Endothelial cell of umbilical vein (primary cell): ENCODE measurements at regions of chr18 and their contacts with region 1.

Region 1: GRCh38 chr18:28003451-28003850 is 173.5 kb downstream of the CDH2 start:
- DNase-seq: peak; percentile 83
- H3K4me3 ChIP-seq: no peak overlapping the region
- H3K27ac ChIP-seq: peak overlapping the region; percentile 70
- H3K4me1 ChIP-seq: peaks cover 31% of the 10 kb centered on the region
- H3K27me3 ChIP-seq: no peaks in the 10 kb centered on the region
- CTCF ChIP-seq: no peak
- POLR2A ChIP-seq: no peak

Region 2: GRCh38 chr18:26422472-26423162 is 1580.8 kb before region 1 on chr18:
- CTCF ChIA-PET with region 1: no interaction called
- POLR2A ChIA-PET with region 1: no interaction called
- dilution Hi-C with region 1: no loop called
- intact Hi-C with region 1: no loop called
- DNase-seq: no peak
- H3K4me3 ChIP-seq: no peak overlapping the region
- H3K27ac ChIP-seq: no peak overlapping the region
- H3K4me1 ChIP-seq: no peaks in the 10 kb centered on the region
- H3K27me3 ChIP-seq: no peaks in the 10 kb centered on the region
- CTCF ChIP-seq: no peak
- POLR2A ChIP-seq: no peak

Region 3: GRCh38 chr18:27839141-27839540 is 164.3 kb before region 1 on chr18:
- CTCF ChIA-PET with region 1: no interaction called
- POLR2A ChIA-PET with region 1: no interaction called
- dilution Hi-C with region 1: no loop called
- intact Hi-C with region 1: loop called (anchors 5 kb)
- DNase-seq: peak; percentile 89
- H3K4me3 ChIP-seq: no peak overlapping the region
- H3K27ac ChIP-seq: peak overlapping the region; percentile 88
- H3K4me1 ChIP-seq: peaks cover 34% of the 10 kb centered on the region
- H3K27me3 ChIP-seq: no peaks in the 10 kb centered on the region
- CTCF ChIP-seq: no peak
- POLR2A ChIP-seq: no peak